SK-N-SH (cell line): ENCODE measurements at regions of chr7 and their contacts with region 1.

Region 1: GRCh38 chr7:150876817-150877526 is 24.7 kb downstream of the AOC1 start:
- DNase-seq: peak; percentile 91
- H3K4me3 ChIP-seq: no peak overlapping the region
- H3K27ac ChIP-seq: peak overlapping the region in 1 of 2 experiments; percentile 60; a peak in 2 of 4 replicates
- H3K4me1 ChIP-seq: peaks cover 5% of the 10 kb centered on the region in 2 experiments; a peak in 2 of 4 replicates
- H3K27me3 ChIP-seq: no peaks in the 10 kb centered on the region
- CTCF ChIP-seq: peak; percentile 58
- EP300 ChIP-seq: no peak
- RAD21 ChIP-seq: peak; percentile 69

Region 2: DNA sequence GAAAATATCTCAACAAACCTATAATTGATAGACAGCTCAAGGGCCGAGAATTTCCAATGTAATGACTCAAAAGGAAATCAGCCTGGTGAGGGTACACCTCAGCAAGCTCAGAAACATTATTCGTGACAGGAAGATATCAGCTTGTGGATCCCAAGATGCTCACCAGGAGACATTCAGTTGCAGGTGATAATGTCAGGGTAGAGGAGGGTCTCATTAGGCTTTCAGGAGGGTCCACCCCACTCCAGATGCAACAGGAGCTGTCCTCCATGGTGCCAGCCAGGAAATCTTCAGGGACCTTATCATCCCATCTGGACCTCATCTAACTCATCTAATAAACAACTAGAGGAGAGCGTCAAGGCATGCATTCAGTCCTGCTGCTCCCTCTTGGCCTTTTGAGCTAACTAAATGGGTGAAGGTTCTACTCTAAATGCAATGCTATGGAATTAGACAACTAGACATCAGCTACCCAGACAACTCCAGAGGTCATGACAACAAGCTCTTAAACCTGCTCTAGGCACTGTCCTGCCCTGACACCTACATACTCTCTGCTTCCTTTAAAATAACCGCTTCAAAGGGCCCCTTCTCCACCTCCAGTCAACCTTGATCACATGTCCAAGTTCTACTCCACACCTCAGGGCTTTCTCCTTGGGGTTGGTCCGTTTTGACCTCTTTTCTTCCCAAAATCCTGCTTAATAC is 144.0 kb before region 1 on chr7:
- CTCF ChIA-PET with region 1: no interaction called
- POLR2A ChIA-PET with region 1: no interaction called
- DNase-seq: no peak
- H3K4me3 ChIP-seq: no peak overlapping the region
- H3K27ac ChIP-seq: no peak overlapping the region
- H3K4me1 ChIP-seq: peaks cover 0 to 2% of the 10 kb centered on the region in 2 experiments; a peak in 1 of 4 replicates
- H3K27me3 ChIP-seq: no peaks in the 10 kb centered on the region; the same call in 1 of the 2 replicates
- CTCF ChIP-seq: no peak
- EP300 ChIP-seq: no peak
- RAD21 ChIP-seq: no peak

Region 3: GRCh38 chr7:150793569-150794238 is 83.3 kb before region 1 on chr7:
- CTCF ChIA-PET with region 1: interaction called, 136 read pairs
- POLR2A ChIA-PET with region 1: no interaction called
- DNase-seq: peak; percentile 8
- H3K4me3 ChIP-seq: no peak overlapping the region
- H3K27ac ChIP-seq: no peak overlapping the region
- H3K4me1 ChIP-seq: peaks cover under 1 to 25% of the 10 kb centered on the region in 2 experiments; a peak in 3 of 4 replicates
- H3K27me3 ChIP-seq: no peaks in the 10 kb centered on the region
- CTCF ChIP-seq: no peak
- EP300 ChIP-seq: no peak
- RAD21 ChIP-seq: no peak

Region 4: DNA sequence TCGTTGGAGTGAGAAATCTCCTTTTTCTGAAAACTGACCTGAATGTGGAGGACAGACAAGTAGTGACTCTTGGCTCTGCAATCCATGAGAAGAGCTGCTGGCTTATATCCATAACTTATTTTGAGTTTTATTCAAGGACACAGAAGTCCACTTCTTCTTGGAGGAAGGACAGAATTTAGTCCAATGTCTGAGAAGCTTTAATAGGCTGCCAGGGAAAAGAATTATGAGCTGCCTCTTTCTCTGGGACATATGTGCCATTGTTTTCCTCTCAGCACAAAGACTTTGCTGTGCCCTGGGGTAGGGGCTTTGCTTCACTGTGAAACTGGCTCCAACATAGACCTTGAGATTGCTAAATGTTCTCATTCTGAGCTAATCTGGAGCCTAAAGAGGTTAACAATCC is 45.1 kb before region 1 on chr7:
- CTCF ChIA-PET with region 1: interaction called, 11 read pairs
- POLR2A ChIA-PET with region 1: no interaction called
- DNase-seq: no peak
- H3K4me3 ChIP-seq: no peak overlapping the region
- H3K27ac ChIP-seq: no peak overlapping the region
- H3K4me1 ChIP-seq: no peaks in the 10 kb centered on the region; a peak in 1 of 4 replicates
- H3K27me3 ChIP-seq: no peaks in the 10 kb centered on the region
- CTCF ChIP-seq: no peak
- EP300 ChIP-seq: no peak
- RAD21 ChIP-seq: no peak

Region 5: GRCh38 chr7:151123822-151124464 is 247.0 kb after region 1 on chr7:
- CTCF ChIA-PET with region 1: no interaction called
- POLR2A ChIA-PET with region 1: no interaction called
- DNase-seq: peak; percentile 98
- H3K4me3 ChIP-seq: no peak overlapping the region; a peak in 1 of 4 replicates
- H3K27ac ChIP-seq: no peak overlapping the region
- H3K4me1 ChIP-seq: no peaks in the 10 kb centered on the region; a peak in 1 of 4 replicates
- H3K27me3 ChIP-seq: no peaks in the 10 kb centered on the region
- CTCF ChIP-seq: peak; percentile 100
- EP300 ChIP-seq: no peak
- RAD21 ChIP-seq: peak; percentile 98